ENCODE measurements at regions of chr1 and their contacts with region 1.

Region 1: GRCh38 chr1:228082135-228082891 is at the start of gene ARF1:
- DNase-seq: peak; percentile 89 to 99 (median 96)
- ATAC-seq: peak; percentile 97
- H3K4me3 ChIP-seq: peak within 1 kb of the TSS; percentile 88
- H3K4me3 Mint-ChIP-seq: peak within 1 kb of the TSS; percentile 89 to 97 (median 95)
- H3K27ac ChIP-seq: peak within 1 kb of the TSS; percentile 97
- H3K27ac Mint-ChIP-seq: peak within 1 kb of the TSS; percentile 76 to 97 (median 95)
- H3K4me1 ChIP-seq: peaks cover 41 to 43% of the 10 kb centered on the region in 2 donors
- H3K4me1 Mint-ChIP-seq: peaks cover 36 to 66% (median 52%) of the 10 kb centered on the region in 7 donors
- H3K27me3 ChIP-seq: no peaks in the 10 kb centered on the region
- H3K27me3 Mint-ChIP-seq: no peaks in the 10 kb centered on the region
- total RNA-seq, gene ARF1: 198 to 390 (median 259) TPM

Region 2: GRCh38 chr1:227734856-227735538 is 347.3 kb before region 1 on chr1 and contains the starts of genes JMJD4 and SNAP47:
- CTCF ChIA-PET with region 1: no interaction called
- POLR2A ChIA-PET with region 1: interaction called, 3 read pairs
- intact Hi-C with region 1: loop called (anchors 1 kb)
- DNase-seq: peak; percentile 85 to 98 (median 93)
- ATAC-seq: peak; percentile 94
- H3K4me3 ChIP-seq: peak within 1 kb of the TSS; percentile 72
- H3K4me3 Mint-ChIP-seq: peak within 1 kb of the TSS; percentile 87 to 97 (median 90)
- H3K27ac ChIP-seq: peak within 1 kb of the TSS; percentile 87
- H3K27ac Mint-ChIP-seq: peak within 1 kb of the TSS; percentile 62 to 96 (median 89)
- H3K4me1 ChIP-seq: peaks cover 3 to 16% of the 10 kb centered on the region in 2 donors
- H3K4me1 Mint-ChIP-seq: peaks cover 28 to 59% (median 40%) of the 10 kb centered on the region in 7 donors
- H3K27me3 ChIP-seq: no peaks in the 10 kb centered on the region
- H3K27me3 Mint-ChIP-seq: no peaks in the 10 kb centered on the region
- total RNA-seq, gene JMJD4: 12.1 to 36.8 (median 26.3) TPM
- total RNA-seq, gene SNAP47: 18.5 to 31.8 (median 27.8) TPM

Region 3: DNA sequence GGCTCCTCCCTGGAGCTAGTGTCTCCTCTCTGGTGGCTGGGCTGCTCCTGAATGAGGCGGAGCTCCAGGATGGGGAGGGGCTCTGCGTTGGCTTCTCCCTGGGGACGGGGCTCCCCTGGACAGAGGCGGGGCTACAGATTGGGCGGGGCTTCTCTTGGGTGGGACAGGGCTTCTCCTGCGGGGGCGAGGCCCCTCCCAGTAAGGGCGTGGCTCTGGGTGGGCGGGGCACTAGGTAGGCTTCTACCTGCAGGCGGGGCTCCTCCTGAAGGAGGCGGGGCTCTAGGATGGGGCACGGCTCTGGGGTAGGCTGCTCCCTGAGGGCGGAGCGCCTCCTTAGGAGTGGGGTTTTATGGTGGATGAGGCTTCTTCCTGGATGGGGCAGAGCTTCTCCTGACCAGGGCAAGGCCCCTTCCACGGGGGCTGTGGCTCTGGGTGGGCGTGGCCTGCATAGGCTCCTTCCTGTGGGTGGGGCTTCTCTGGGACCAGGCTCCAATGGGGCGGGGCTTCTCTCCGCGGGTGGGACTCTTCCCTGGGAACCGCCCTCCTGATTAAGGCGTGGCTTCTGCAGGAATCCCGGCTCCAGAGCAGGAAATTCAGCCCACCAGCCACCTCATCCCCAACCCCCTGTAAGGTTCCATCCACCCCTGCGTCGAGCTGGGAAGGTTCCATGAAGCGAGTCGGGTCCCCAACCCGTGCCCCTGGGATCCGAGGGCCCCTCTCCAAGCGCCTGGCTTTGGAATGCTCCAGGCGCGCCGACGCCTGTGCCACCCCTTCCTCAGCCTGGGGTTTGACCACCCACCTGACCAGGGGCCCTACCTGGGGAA is 22.5 kb before region 1 on chr1:
- CTCF ChIA-PET with region 1: no interaction called
- POLR2A ChIA-PET with region 1: interaction called, 4 read pairs
- intact Hi-C with region 1: loop called (anchors 1 kb)
- DNase-seq: peak in 6 of 9 donors; percentile 42 to 76 (median 52)
- ATAC-seq: peak; percentile 73
- H3K4me3 ChIP-seq: peak overlapping the region; percentile 48
- H3K4me3 Mint-ChIP-seq: peak overlapping the region; percentile 58 to 82 (median 66)
- H3K27ac ChIP-seq: no peak overlapping the region
- H3K27ac Mint-ChIP-seq: peak overlapping the region in 4 of 9 donors; percentile 51 to 70 (median 60)
- H3K4me1 ChIP-seq: peaks cover 5 to 19% of the 10 kb centered on the region in 2 donors
- H3K4me1 Mint-ChIP-seq: peaks cover 6 to 15% (median 7%) of the 10 kb centered on the region in 7 donors
- H3K27me3 ChIP-seq: peaks cover 9 to 30% of the 10 kb centered on the region in 2 donors
- H3K27me3 Mint-ChIP-seq: peaks cover 21 to 50% (median 38%) of the 10 kb centered on the region in 5 donors

Region 4: GRCh38 chr1:228097328-228098081 is 15.2 kb after region 1 on chr1:
- CTCF ChIA-PET with region 1: interaction called, 3 read pairs
- POLR2A ChIA-PET with region 1: interaction called, 10 read pairs
- intact Hi-C with region 1: no loop called
- DNase-seq: no peak
- ATAC-seq: no peak
- H3K4me3 ChIP-seq: no peak overlapping the region
- H3K4me3 Mint-ChIP-seq: no peak overlapping the region
- H3K27ac ChIP-seq: no peak overlapping the region
- H3K27ac Mint-ChIP-seq: peak overlapping the region in 3 of 9 donors; percentile 26 to 86 (median 81)
- H3K4me1 ChIP-seq: peaks cover 12 to 19% of the 10 kb centered on the region in 2 donors
- H3K4me1 Mint-ChIP-seq: peaks cover 18 to 41% (median 34%) of the 10 kb centered on the region in 7 donors
- H3K27me3 ChIP-seq: no peaks in the 10 kb centered on the region
- H3K27me3 Mint-ChIP-seq: no peaks in the 10 kb centered on the region

Region 5: GRCh38 chr1:228102791-228103620 is 20.7 kb after region 1 on chr1 and contains the start of gene C1orf35:
- CTCF ChIA-PET with region 1: interaction called, 3 read pairs
- POLR2A ChIA-PET with region 1: interaction called, 10 read pairs
- intact Hi-C with region 1: loop called (anchors 1 kb)
- DNase-seq: peak; percentile 90 to 97 (median 93)
- ATAC-seq: peak; percentile 85
- H3K4me3 ChIP-seq: peak within 1 kb of the TSS; percentile 95
- H3K4me3 Mint-ChIP-seq: peak within 1 kb of the TSS; percentile 91 to 97 (median 93)
- H3K27ac ChIP-seq: peak within 1 kb of the TSS; percentile 94
- H3K27ac Mint-ChIP-seq: peak within 1 kb of the TSS; percentile 90 to 95 (median 94)
- H3K4me1 ChIP-seq: peaks cover 17 to 20% of the 10 kb centered on the region in 2 donors
- H3K4me1 Mint-ChIP-seq: peaks cover 6 to 43% (median 23%) of the 10 kb centered on the region in 7 donors
- H3K27me3 ChIP-seq: no peaks in the 10 kb centered on the region
- H3K27me3 Mint-ChIP-seq: no peaks in the 10 kb centered on the region
- total RNA-seq, gene C1orf35: 16.8 to 31.8 (median 27.8) TPM

Region 6: DNA sequence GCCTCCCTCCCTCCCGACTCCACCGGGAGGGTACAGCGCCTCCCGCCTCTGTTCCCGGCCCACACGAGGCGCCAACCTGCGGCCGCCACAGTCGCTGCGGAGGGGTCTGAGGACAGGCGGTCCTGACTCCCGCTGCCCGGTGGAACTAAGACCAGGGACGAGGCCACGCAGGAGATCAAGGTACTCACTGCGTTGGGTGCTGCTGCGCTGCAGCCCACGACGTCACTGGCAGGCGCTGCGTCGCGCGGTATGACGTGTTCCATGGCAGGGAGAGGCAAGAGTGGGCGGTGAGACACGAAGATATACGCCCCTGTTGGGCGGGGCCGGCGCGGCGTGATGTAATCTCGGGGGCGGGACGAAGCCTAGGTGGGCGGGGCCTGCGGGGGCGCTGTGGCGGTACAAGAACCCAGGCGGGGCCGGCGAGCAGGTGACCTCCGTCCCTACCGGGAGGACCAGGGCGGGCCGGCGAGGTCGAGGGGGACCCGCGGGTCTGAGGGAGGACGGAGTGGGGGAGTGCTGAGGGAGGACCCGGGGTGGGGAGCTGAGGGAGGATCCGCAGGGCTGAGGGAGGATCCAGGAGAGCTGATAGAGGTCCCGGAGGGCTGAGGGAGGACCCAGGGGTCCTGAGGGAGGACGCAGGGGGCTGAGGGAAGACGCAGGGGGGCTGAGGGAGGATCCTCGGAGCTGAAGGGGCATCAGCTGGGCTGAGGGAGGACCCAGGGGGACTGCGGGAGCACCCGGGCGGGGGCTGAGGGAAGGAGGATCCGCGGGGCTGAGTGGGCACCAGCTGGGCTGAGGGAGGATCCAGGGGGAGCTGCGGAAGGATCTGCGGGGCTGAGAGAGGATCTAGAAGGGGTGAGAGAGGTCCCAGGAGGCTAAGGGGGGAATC is 27.0 kb after region 1 on chr1 and contains the start of gene MRPL55:
- CTCF ChIA-PET with region 1: interaction called, 3 read pairs
- POLR2A ChIA-PET with region 1: interaction called, 8 read pairs
- intact Hi-C with region 1: loop called (anchors 1 kb)
- DNase-seq: peak; percentile 97 to 100 (median 99)
- ATAC-seq: peak; percentile 99
- H3K4me3 ChIP-seq: peak within 1 kb of the TSS; percentile 100
- H3K4me3 Mint-ChIP-seq: peak within 1 kb of the TSS; percentile 87 to 95 (median 93)
- H3K27ac ChIP-seq: peak within 1 kb of the TSS; percentile 94
- H3K27ac Mint-ChIP-seq: peak within 1 kb of the TSS; percentile 88 to 98 (median 95)
- H3K4me1 ChIP-seq: peaks cover 9 to 16% of the 10 kb centered on the region in 2 donors
- H3K4me1 Mint-ChIP-seq: peaks cover 5 to 37% (median 26%) of the 10 kb centered on the region in 7 donors
- H3K27me3 ChIP-seq: no peaks in the 10 kb centered on the region
- H3K27me3 Mint-ChIP-seq: peaks cover 0 to 3% (median 0%) of the 10 kb centered on the region in 5 donors
- total RNA-seq, gene MRPL55: 34.3 to 79.3 (median 65.2) TPM

Region 7: GRCh38 chr1:228131766-228132165 is 49.5 kb after region 1 on chr1:
- CTCF ChIA-PET with region 1: no interaction called
- POLR2A ChIA-PET with region 1: no interaction called
- intact Hi-C with region 1: no loop called
- DNase-seq: peak in 1 of 9 donors; percentile 6
- ATAC-seq: no peak
- H3K4me3 ChIP-seq: no peak overlapping the region
- H3K4me3 Mint-ChIP-seq: no peak overlapping the region
- H3K27ac ChIP-seq: no peak overlapping the region
- H3K27ac Mint-ChIP-seq: no peak overlapping the region
- H3K4me1 ChIP-seq: peaks cover 0 to 11% of the 10 kb centered on the region in 2 donors
- H3K4me1 Mint-ChIP-seq: peaks cover 0 to 11% (median 7%) of the 10 kb centered on the region in 7 donors
- H3K27me3 ChIP-seq: no peaks in the 10 kb centered on the region
- H3K27me3 Mint-ChIP-seq: peaks cover 0 to 53% (median 9%) of the 10 kb centered on the region in 5 donors

Region 8: DNA sequence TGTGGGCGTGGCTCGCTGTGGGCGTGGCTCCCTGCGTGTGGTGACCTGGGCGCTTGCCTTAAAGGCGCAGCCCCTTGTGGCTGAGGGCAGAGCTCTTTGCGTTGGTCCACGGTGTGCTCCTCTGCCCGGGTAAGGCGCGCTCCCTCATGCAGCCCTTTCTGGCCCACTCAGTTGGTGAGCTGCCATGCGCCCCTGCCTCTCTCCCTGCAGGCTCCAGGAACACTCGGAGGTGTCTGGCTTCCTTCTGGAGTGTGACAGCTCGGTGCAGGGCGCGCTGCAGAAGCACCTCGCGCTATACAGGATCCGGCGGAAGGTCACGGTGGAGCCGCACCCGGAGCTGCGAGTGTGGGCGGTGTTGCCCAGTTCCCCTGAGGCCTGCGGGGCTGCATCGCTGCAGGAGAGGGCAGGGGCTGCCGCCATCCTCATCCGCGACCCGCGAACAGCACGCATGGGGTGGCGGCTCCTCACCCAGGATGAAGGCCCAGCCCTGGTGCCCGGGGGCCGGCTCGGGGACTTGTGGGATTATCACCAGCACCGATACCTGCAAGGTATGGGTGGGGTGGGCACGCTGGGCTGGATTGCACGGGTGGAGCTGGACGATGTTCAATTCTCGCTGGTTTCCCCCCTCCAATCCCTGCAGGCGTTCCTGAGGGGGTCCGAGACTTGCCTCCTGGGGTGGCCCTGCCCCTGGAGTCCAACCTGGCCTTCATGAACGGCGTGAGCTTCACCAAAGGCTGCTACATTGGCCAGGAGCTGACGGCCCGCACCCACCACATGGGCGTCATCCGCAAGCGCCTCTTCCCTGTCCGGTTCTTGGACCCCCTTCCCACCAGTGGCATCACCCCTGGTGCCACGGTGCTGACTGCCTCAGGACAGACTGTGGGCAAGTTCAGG is 92.4 kb after region 1 on chr1:
- CTCF ChIA-PET with region 1: no interaction called
- POLR2A ChIA-PET with region 1: no interaction called
- intact Hi-C with region 1: no loop called
- DNase-seq: peak in 5 of 9 donors; percentile 24 to 58 (median 34)
- ATAC-seq: peak; percentile 78
- H3K4me3 ChIP-seq: no peak overlapping the region
- H3K4me3 Mint-ChIP-seq: no peak overlapping the region
- H3K27ac ChIP-seq: no peak overlapping the region
- H3K27ac Mint-ChIP-seq: peak overlapping the region in 1 of 9 donors; percentile 67
- H3K4me1 ChIP-seq: no peaks in the 10 kb centered on the region
- H3K4me1 Mint-ChIP-seq: peaks cover 3 to 18% (median 10%) of the 10 kb centered on the region in 7 donors
- H3K27me3 ChIP-seq: no peaks in the 10 kb centered on the region
- H3K27me3 Mint-ChIP-seq: no peaks in the 10 kb centered on the region

Region 9: GRCh38 chr1:228464487-228464983 is 382.2 kb after region 1 on chr1:
- CTCF ChIA-PET with region 1: no interaction called
- POLR2A ChIA-PET with region 1: no interaction called
- intact Hi-C with region 1: loop called in 1 of 2 experiments (anchors 2 kb)
- DNase-seq: peak; percentile 56 to 93 (median 85)
- ATAC-seq: peak; percentile 98
- H3K4me3 ChIP-seq: peak overlapping the region; percentile 62
- H3K4me3 Mint-ChIP-seq: peak overlapping the region; percentile 73 to 93 (median 82)
- H3K27ac ChIP-seq: peak overlapping the region; percentile 50
- H3K27ac Mint-ChIP-seq: peak overlapping the region; percentile 13 to 92 (median 62)
- H3K4me1 ChIP-seq: peaks cover 17 to 18% of the 10 kb centered on the region in 2 donors
- H3K4me1 Mint-ChIP-seq: peaks cover 24 to 66% (median 40%) of the 10 kb centered on the region in 7 donors
- H3K27me3 ChIP-seq: no peaks in the 10 kb centered on the region
- H3K27me3 Mint-ChIP-seq: peaks cover 11 to 34% (median 24%) of the 10 kb centered on the region in 5 donors